ENCODE measurements at regions of chr3 and their contacts with region 1.

Region 1: DNA sequence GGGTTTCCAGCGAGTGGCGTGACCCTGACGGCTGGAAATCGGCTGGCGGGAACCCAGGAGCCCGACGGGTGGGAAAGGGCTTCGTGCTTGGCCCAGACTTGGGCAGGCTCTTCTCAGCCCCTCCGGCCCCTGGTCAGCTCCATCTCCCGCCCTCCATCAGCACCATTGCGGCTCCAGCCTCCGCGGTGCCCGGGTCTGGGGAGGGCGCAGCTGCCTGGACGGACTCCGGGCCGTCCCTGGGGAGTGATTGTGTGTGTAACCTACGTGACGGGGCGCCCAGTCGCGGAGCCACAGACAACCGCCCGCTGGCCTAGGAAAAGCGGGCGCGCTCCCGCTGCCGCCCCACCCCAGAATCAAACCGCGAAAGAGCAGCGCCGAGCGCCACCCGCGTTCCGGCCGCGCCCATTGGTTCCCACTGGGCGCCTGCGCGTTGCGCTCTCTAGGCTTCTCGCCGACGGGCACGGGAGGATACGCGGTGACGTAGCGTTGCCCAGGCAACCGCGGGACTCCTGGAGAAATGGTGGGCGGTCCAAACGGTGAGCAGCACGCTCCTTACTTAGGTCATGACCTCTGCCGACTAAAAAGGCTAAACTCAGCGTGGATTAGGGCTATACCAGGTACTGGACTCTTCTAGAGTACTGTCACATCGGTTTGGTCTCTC is at the start of gene CFAP20DC:
- DNase-seq: peak; percentile 95
- H3K4me3 Mint-ChIP-seq: peak within 1 kb of the TSS; percentile 68
- H3K27ac Mint-ChIP-seq: peak within 1 kb of the TSS; percentile 68
- H3K4me1 Mint-ChIP-seq: peaks cover 9% of the 10 kb centered on the region
- H3K27me3 Mint-ChIP-seq: no peaks in the 10 kb centered on the region
- total RNA-seq, gene CFAP20DC: 2.4 to 2.7 TPM

Region 2: DNA sequence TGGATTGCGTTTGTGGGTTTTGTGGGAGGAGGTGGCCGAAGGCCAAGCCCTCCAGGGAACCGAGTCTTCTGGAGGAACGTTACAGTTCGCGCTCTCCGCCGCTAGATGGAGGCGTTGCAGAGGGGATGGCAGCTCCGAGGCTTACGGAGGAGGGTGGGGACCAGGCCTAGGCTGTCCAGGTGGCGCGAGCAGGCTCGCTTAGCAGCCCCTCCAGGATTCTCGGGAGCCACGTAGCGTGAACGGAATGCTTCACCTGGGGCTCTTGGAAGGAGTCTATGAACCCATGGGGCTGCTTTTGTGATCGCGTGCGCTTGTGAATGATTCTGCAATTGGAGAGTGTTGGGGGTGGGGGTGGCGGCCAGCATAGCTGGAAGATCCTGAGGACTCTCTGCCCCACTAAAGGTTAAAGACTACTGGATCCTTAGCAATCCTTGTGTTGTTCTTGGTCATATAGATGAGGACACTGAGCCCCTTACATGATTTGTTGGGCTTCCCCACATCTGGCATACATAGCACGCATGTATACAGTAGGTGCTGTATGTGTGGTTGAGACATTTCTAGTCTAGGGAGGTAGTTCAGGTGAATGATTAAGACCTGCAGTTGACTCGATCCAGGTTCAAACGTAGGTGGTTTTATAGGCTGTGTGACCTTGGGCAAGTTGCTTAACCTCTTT is 409.0 kb before region 1 on chr3:
- CTCF ChIA-PET with region 1: interaction called, 20 read pairs
- intact Hi-C with region 1: loop called (anchors 1 kb)
- DNase-seq: peak; percentile 76
- H3K4me3 Mint-ChIP-seq: no peak overlapping the region
- H3K27ac Mint-ChIP-seq: no peak overlapping the region
- H3K4me1 Mint-ChIP-seq: no peaks in the 10 kb centered on the region
- H3K27me3 Mint-ChIP-seq: peaks cover 2% of the 10 kb centered on the region

Region 3: DNA sequence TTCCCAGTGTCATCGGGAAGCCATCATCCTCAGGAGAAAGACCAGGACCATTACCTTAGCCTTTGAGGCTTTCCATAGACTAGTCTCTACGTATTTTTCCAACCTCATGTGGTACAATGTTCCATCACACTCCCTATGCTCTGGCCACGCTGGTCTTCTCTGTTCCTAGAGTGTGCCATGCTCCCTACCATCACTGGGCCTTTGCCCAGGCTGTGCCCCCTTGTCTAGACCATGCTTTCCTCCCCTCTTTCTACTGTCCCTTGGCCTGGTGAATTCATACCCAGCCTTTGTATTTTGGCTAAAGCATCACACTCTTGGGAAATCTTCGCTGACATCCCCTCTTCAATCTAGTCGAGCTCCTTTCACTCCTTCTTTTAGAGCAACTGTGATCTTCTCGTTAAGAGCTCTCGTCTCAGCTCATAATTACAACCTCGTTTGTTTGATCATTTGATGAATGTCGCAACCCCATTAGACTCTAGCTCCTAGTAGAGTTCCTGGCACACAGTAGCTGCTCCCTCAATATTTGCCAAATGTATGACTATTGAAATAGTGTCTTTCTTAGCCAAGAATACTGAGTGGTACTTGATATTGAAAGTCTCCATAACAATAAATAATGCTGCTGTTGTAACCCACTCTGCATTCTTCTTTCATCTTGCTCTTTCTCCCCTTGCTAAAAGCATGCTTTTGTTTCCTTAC is 283.1 kb before region 1 on chr3:
- CTCF ChIA-PET with region 1: no interaction called
- intact Hi-C with region 1: no loop called
- DNase-seq: no peak
- H3K4me3 Mint-ChIP-seq: no peak overlapping the region
- H3K27ac Mint-ChIP-seq: no peak overlapping the region
- H3K4me1 Mint-ChIP-seq: no peaks in the 10 kb centered on the region
- H3K27me3 Mint-ChIP-seq: peaks cover 5% of the 10 kb centered on the region

Region 4: DNA sequence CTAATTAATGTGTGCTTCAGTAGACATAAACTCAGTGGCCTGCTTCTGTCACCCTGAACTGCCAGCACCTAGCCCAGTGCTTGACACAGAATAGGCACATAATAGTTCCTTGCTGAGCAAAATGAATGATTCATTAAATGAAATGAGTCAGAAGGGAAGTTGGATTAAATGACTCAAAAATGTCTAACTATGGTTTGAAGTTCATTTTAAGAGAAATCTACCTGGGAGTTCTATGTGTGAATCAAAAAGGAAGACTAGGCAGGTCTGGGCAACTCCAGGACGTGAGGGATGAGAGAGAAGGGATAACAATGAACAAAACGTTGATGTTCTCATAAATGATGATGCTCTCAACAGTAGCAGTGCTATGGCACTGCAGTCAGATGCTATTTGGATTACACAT is 175.0 kb before region 1 on chr3:
- CTCF ChIA-PET with region 1: no interaction called
- intact Hi-C with region 1: loop called (anchors 2 kb)
- DNase-seq: peak; percentile 46
- H3K4me3 Mint-ChIP-seq: no peak overlapping the region
- H3K27ac Mint-ChIP-seq: peak overlapping the region; percentile 77
- H3K4me1 Mint-ChIP-seq: peaks cover 15% of the 10 kb centered on the region
- H3K27me3 Mint-ChIP-seq: peaks cover 16% of the 10 kb centered on the region

Region 5: DNA sequence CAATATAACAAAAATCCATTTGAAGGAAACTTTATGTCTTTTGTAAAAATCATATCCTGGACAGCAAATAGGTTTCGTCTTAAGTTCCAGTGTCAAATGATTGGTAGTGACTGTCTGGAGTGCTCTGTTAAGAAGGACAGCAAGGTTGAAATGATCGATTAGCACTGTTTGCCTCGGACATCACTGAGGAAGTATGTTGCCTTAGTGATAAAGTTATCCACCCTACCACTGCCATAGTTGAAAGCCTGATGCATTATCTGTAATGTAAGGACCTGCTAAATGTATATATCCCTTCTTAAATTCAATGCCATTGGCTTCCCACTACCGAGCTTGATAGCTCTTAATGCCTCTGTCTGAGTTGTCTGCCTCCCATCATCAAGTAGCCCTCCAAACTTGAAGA is 70.0 kb before region 1 on chr3:
- CTCF ChIA-PET with region 1: no interaction called
- intact Hi-C with region 1: no loop called
- DNase-seq: no peak
- H3K4me3 Mint-ChIP-seq: no peak overlapping the region
- H3K27ac Mint-ChIP-seq: no peak overlapping the region
- H3K4me1 Mint-ChIP-seq: no peaks in the 10 kb centered on the region
- H3K27me3 Mint-ChIP-seq: peaks cover 8% of the 10 kb centered on the region